ENCODE measurements at regions of chr3 and their contacts with region 1.

Region 1: DNA sequence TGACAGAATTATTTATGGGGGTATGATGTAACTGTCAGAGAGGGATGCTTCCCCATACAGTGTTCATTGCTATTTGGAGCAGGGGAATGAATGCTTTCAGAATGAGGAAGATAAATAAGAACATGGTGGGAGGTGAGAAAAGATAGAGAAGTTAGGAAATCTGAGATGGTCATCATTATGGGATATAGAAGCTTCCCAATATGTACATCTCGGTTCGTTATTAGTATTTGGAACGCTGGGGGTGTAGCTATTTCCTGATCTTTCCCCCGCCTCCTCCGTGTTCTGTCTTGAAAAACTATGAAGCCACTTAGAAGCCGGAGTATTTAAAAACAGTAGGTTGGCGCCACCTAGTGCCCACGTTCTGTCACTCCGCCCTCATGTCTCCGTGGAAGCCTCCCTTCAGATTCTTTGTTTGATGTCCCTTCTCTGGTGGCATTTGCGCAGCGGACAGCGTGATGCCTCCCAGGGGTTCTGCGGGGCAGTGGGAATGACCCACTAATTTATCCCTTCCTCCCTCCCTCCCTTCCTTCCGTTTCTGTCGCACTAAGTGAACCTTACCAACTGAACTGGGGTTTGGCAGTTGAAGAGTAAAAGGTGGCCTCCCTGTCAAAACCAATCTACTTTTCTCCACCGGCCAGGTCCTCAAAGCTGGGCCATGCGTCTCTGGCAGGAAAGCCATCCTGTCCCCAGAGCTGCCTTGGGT is 184.5 kb downstream of the FEZF2 start:
- DNase-seq: peak; percentile 78 to 87 (median 81)
- H3K4me3 ChIP-seq: no peak overlapping the region
- H3K27ac ChIP-seq: no peak overlapping the region
- H3K4me1 ChIP-seq: peaks cover 0 to 5% (median 0%) of the 10 kb centered on the region in 3 donors
- H3K27me3 ChIP-seq: no peaks in the 10 kb centered on the region
- CTCF ChIP-seq: peak; percentile 79

Region 2: GRCh38 chr3:61796098-61796680 is 392.6 kb before region 1 on chr3:
- intact Hi-C with region 1: no loop called
- DNase-seq: no peak
- H3K4me3 ChIP-seq: no peak overlapping the region
- H3K27ac ChIP-seq: no peak overlapping the region
- H3K4me1 ChIP-seq: peaks cover 0 to 11% (median 8%) of the 10 kb centered on the region in 3 donors
- H3K27me3 ChIP-seq: no peaks in the 10 kb centered on the region
- CTCF ChIP-seq: no peak

Region 3: GRCh38 chr3:61864886-61865285 is 323.9 kb before region 1 on chr3:
- intact Hi-C with region 1: loop called (anchors 10 kb)
- DNase-seq: no peak
- H3K4me3 ChIP-seq: no peak overlapping the region
- H3K27ac ChIP-seq: no peak overlapping the region
- H3K4me1 ChIP-seq: peaks cover 0 to 27% (median 18%) of the 10 kb centered on the region in 3 donors
- H3K27me3 ChIP-seq: no peaks in the 10 kb centered on the region
- CTCF ChIP-seq: no peak

Measured in kidney (tissue), 22 donors.